Left cardiac atrium (tissue), 4 donors: ENCODE measurements at regions of chr6 and their contacts with region 1.

Region 1: DNA sequence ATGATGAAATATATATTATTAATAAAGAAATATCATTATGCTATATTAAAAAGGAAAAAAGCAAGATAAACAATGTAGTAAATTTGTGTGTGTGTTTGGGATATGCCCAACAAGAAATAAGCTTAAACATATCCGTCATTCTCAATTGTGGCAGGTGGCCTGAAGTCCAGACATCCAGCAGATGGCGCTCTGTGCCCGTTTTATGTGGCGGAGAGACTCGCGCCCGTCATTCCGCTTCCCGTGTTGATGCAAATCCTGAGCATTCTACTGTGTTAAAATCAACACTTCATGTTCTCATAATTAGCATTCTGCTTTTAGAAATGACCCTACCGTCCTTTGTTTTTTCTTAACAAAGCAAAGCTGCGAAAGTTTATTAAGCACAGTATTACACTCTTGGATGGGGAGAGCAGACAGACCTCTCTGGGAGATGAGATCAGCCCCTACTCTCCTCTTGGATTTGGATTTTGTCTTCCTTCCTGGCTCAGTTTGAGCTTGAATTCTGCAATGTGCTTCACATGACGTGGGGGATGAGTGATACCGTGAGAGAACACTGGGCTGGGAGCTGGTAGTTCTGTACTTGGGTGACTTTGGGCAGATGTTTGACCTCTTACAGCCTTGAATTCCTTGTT is 125.8 kb downstream of the MCHR2 start:
- DNase-seq: peak; percentile 74
- ATAC-seq: peak; percentile 50 to 76

Region 2: GRCh38 chr6:99905209-99906106 is 37.3 kb after region 1 on chr6:
- intact Hi-C with region 1: loop called in 1 of 2 experiments (anchors 5 kb)
- DNase-seq: no peak
- ATAC-seq: peak; percentile 27 to 47

Region 3: GRCh38 chr6:100099189-100100074 is 231.2 kb after region 1 on chr6:
- intact Hi-C with region 1: loop called (anchors 2 to 10 kb)
- DNase-seq: no peak
- ATAC-seq: no peak